ENCODE measurements at regions of chr17 and their contacts with region 1.

Region 1: GRCh38 chr17:42153919-42154742 is 658 bp downstream of the RAB5C start:
- DNase-seq: no peak
- H3K4me3 Mint-ChIP-seq: peak overlapping the region; percentile 83
- H3K27ac Mint-ChIP-seq: peak overlapping the region; percentile 87
- H3K4me1 Mint-ChIP-seq: peaks cover 39% of the 10 kb centered on the region
- H3K27me3 Mint-ChIP-seq: no peaks in the 10 kb centered on the region

Region 2: DNA sequence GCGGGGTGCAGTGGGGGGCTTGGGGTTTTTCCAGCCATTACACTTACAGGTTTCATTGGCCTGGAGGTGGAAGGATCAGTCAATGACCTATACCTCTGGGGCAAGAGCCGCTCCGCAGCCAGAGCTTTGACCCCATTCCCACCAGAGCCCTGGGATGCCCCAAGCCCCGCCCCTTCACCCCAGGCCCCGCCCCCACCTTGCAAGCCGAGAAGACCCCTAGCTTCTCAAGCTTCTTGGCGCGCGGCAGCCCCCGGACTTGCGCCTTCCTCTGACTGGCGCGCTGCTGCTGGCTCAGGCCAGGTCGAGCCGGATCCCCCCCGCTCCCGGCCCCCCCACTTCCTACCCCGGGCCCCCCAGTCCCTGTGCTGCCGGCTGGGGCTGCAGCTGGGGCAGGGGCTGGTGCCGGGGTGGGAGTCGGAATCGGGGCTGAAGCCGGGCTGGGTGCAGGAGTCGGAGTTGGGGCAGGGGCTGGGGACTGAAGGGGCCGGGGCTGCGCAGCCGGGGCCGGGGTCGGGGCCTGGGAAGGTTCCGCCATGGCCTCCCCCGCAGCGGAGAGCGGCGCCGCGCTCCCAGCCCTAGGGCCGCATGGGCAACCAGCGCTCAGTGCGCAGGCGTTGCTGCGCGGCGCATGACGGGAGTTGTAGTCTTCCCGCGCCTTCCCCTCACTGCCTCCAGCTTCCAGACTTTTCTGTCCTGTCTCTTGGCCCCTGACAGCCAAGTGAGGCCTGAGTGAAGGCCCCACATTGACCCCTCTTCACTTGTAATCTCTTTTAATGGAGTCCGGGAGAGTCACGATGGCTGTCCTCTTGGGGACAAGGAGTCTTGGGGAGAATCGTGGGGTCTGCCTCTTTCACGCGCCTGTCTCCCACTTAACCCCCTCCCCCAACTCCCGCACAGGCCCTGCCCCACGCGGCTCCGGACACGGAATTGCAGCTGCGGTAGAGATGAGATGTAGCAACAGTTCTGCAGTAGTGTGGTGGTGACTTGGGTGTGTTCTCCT is 33.1 kb before region 1 on chr17 and contains the start of gene KAT2A:
- CTCF ChIA-PET with region 1: no interaction called
- intact Hi-C with region 1: loop called (anchors 1 kb)
- DNase-seq: peak; percentile 80
- H3K4me3 Mint-ChIP-seq: peak within 1 kb of the TSS; percentile 59
- H3K27ac Mint-ChIP-seq: peak within 1 kb of the TSS; percentile 72
- H3K4me1 Mint-ChIP-seq: peaks cover 28% of the 10 kb centered on the region
- H3K27me3 Mint-ChIP-seq: no peaks in the 10 kb centered on the region
- total RNA-seq, gene KAT2A: 57.3 to 59.0 TPM

Region 3: GRCh38 chr17:42212382-42212781 is 58.3 kb after region 1 on chr17:
- CTCF ChIA-PET with region 1: no interaction called
- intact Hi-C with region 1: no loop called
- DNase-seq: no peak
- H3K4me3 Mint-ChIP-seq: no peak overlapping the region
- H3K27ac Mint-ChIP-seq: no peak overlapping the region
- H3K4me1 Mint-ChIP-seq: no peaks in the 10 kb centered on the region
- H3K27me3 Mint-ChIP-seq: no peaks in the 10 kb centered on the region

Region 4: GRCh38 chr17:42411361-42411760 is 257.2 kb after region 1 on chr17:
- CTCF ChIA-PET with region 1: no interaction called
- intact Hi-C with region 1: no loop called
- DNase-seq: no peak
- H3K4me3 Mint-ChIP-seq: no peak overlapping the region
- H3K27ac Mint-ChIP-seq: no peak overlapping the region
- H3K4me1 Mint-ChIP-seq: peaks cover 19% of the 10 kb centered on the region
- H3K27me3 Mint-ChIP-seq: no peaks in the 10 kb centered on the region

Measured in activated naive CD4-positive, alpha-beta T cell treated with anti-CD3 and anti-CD28 coated beads for 36 hours (primary cell).